Activated CD8-positive, alpha-beta memory T cell treated with anti-CD3 and anti-CD28 coated beads, Interleukin-2, amount 10 ng/mL, durations not matched to agents 7 days and 5 days (primary cell): ENCODE measurements at regions of chr22 and their contacts with region 1.

Region 1: GRCh38 chr22:43014869-43015676 is at the start of gene PACSIN2:
- DNase-seq: peak; percentile 99
- ATAC-seq: peak; percentile 99
- H3K4me3 Mint-ChIP-seq: peak within 1 kb of the TSS; percentile 96
- H3K27ac Mint-ChIP-seq: peak within 1 kb of the TSS; percentile 83
- H3K4me1 Mint-ChIP-seq: peaks cover 22% of the 10 kb centered on the region
- H3K27me3 Mint-ChIP-seq: peaks cover 3% of the 10 kb centered on the region
- total RNA-seq, gene PACSIN2: 32.0 to 39.9 TPM

Region 2: DNA sequence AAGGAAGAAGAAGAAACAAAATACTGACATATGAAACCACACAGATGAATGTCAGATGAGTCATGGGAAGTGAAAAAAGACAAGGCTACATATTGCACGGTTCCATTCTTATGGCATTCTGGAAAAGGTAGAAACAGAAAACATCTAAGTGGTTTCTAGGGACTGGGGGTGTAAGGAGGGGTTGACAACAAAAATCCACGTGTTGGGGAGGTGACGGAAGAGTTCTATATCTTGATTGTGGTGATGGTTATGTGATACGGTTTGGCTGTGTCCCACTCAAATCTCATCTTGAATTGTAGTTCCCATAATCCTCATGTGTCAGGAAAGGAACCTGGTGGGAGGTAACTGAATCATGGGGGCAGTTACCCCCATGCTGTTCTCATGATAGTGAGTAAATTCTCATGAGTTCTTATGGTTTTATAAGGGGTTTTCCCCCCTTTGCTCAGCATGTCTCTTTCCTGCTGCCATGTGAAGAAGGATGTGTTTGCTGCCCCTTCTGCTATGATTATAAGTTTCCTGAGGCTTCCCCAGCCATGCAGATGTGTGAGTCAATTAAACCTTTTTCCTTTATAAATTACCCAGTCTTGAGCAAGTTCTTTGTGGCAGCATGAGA is 151.6 kb before region 1 on chr22:
- CTCF ChIA-PET with region 1: interaction called, 10 read pairs
- DNase-seq: no peak
- ATAC-seq: peak; percentile 18
- H3K4me3 Mint-ChIP-seq: no peak overlapping the region
- H3K27ac Mint-ChIP-seq: peak overlapping the region; percentile 21
- H3K4me1 Mint-ChIP-seq: peaks cover 9% of the 10 kb centered on the region
- H3K27me3 Mint-ChIP-seq: no peaks in the 10 kb centered on the region

Region 3: GRCh38 chr22:43001271-43002201 is 13.5 kb before region 1 on chr22:
- CTCF ChIA-PET with region 1: interaction called, 13 read pairs
- DNase-seq: peak; percentile 62
- ATAC-seq: peak; percentile 35
- H3K4me3 Mint-ChIP-seq: peak overlapping the region; percentile 49
- H3K27ac Mint-ChIP-seq: peak overlapping the region; percentile 79
- H3K4me1 Mint-ChIP-seq: peaks cover 91% of the 10 kb centered on the region
- H3K27me3 Mint-ChIP-seq: no peaks in the 10 kb centered on the region